Breast epithelium (tissue), 4 donors: ENCODE measurements at regions of chr2 and their contacts with region 1.

Region 1: GRCh38 chr2:79612999-79613398 is 100.1 kb downstream of the CTNNA2 start:
- DNase-seq: no peak
- H3K4me3 ChIP-seq: no peak overlapping the region
- H3K27ac ChIP-seq: no peak overlapping the region
- H3K4me1 ChIP-seq: no peaks in the 10 kb centered on the region
- H3K27me3 ChIP-seq: no peaks in the 10 kb centered on the region
- CTCF ChIP-seq: no peak
- POLR2A ChIP-seq: no peak

Region 2: DNA sequence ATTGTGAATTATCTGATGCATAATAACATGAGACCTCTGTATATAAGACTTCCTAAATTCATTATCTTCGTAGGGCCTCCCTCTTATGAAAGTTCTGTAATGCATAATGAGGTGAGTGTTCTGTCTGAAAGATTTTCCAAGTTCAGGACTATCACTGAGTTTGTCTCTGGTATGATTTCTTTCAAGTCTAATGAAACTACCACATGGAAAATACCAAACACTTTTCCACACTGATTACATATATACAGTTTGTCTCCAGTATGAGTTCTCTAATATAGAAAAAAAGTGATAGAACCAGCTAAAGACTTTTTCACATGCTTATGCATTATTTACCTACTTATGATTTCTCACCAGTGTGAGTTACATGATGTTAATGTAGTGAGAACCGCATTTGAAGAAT is 65.4 kb before region 1 on chr2:
- intact Hi-C with region 1: no loop called
- DNase-seq: no peak
- H3K4me3 ChIP-seq: no peak overlapping the region
- H3K27ac ChIP-seq: no peak overlapping the region
- H3K4me1 ChIP-seq: no peaks in the 10 kb centered on the region
- H3K27me3 ChIP-seq: no peaks in the 10 kb centered on the region
- CTCF ChIP-seq: no peak
- POLR2A ChIP-seq: no peak

Region 3: GRCh38 chr2:79564065-79564464 is 48.9 kb before region 1 on chr2:
- intact Hi-C with region 1: no loop called
- DNase-seq: no peak
- H3K4me3 ChIP-seq: no peak overlapping the region
- H3K27ac ChIP-seq: no peak overlapping the region
- H3K4me1 ChIP-seq: no peaks in the 10 kb centered on the region
- H3K27me3 ChIP-seq: no peaks in the 10 kb centered on the region
- CTCF ChIP-seq: no peak
- POLR2A ChIP-seq: no peak

Region 4: DNA sequence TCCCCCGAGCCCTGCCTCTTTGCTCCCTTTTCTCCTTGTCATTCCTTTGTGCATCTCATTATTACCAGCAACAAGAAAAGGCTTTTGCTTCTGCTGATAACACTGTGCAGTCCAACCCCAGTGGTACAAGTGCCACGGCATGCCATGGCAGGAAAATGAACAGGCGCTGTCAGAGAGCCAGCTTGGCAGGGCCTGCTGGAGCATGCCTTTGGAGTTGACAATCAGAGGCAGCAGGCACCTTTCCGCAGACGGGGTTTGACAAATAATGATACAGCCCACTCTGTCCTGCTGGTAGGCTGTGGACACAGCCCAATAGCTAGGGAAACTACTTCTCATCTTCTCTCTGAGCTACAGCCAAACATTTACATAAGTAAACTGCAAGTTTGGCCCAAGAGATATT is 935.5 kb after region 1 on chr2:
- intact Hi-C with region 1: loop called (anchors 10 kb)
- DNase-seq: no peak
- H3K4me3 ChIP-seq: no peak overlapping the region
- H3K27ac ChIP-seq: no peak overlapping the region
- H3K4me1 ChIP-seq: no peaks in the 10 kb centered on the region
- H3K27me3 ChIP-seq: no peaks in the 10 kb centered on the region
- CTCF ChIP-seq: no peak
- POLR2A ChIP-seq: no peak